ENCODE measurements at regions of chr17 and their contacts with region 1.

Region 1: GRCh38 chr17:68777243-68777855 is 176.2 kb upstream of the FAM20A start:
- DNase-seq: peak; percentile 67
- ATAC-seq: peak; percentile 91
- H3K4me3 ChIP-seq: no peak overlapping the region
- H3K27ac ChIP-seq: no peak overlapping the region
- H3K4me1 ChIP-seq: peaks cover 4% of the 10 kb centered on the region; the same call in 1 of the 2 replicates
- H3K27me3 ChIP-seq: no peaks in the 10 kb centered on the region
- CTCF ChIP-seq: peak; percentile 77
- POLR2A ChIP-seq: no peak
- RAD21 ChIP-seq: peak; percentile 85

Region 2: GRCh38 chr17:68247445-68248198 is 529.7 kb before region 1 on chr17 and contains the start of gene AMZ2:
- CTCF ChIA-PET with region 1: no interaction called
- POLR2A ChIA-PET with region 1: interaction called, 11 read pairs
- dilution Hi-C with region 1: no loop called
- in situ Hi-C with region 1: loop called (anchors 25 kb)
- intact Hi-C with region 1: no loop called
- DNase-seq: peak; percentile 91
- ATAC-seq: peak; percentile 98
- H3K4me3 ChIP-seq: peak within 1 kb of the TSS; percentile 78
- H3K27ac ChIP-seq: peak within 1 kb of the TSS; percentile 86
- H3K4me1 ChIP-seq: no peaks in the 10 kb centered on the region
- H3K27me3 ChIP-seq: no peaks in the 10 kb centered on the region
- CTCF ChIP-seq: no peak
- POLR2A ChIP-seq: peak; percentile 81
- RAD21 ChIP-seq: no peak
- total RNA-seq, gene AMZ2: 90.2 and 100.0 TPM in 2 replicates

Region 3: DNA sequence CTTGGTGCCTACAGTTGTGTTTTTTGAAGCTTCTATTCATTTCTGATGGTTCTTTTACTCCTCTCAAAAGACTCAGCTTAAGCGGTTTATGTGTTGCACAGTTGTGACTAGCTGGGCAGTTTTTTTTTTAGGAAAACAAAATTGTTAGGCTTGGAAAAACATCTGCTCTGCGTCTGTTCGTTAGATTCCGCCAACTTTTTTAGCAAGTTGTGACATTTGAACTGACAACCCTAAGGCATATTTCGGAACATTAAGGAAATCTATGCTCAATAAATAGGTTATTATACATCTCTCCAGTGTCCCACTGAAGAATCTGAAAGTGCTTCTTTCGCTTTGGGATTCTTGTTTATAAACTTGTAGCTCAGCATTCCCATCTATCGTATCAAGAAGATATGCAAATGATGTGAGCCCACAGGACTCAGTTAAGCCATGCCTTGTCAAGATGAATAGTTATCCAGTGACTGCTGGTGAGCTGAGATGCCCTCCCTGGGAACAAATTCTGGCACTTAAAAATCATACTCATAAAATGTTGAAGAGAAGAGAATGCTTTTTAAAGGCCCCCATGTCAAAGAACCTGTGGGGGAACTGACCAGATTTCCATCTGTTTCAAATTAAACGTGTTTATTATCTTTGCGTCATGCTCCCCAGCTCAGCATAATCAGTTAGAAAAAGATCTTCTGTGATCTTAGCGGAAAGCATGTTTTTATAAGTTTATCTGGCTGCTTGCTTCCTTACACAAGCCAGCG is 67.1 kb before region 1 on chr17:
- CTCF ChIA-PET with region 1: no interaction called
- POLR2A ChIA-PET with region 1: no interaction called
- dilution Hi-C with region 1: no loop called
- in situ Hi-C with region 1: no loop called
- intact Hi-C with region 1: no loop called
- DNase-seq: peak; percentile 76
- ATAC-seq: peak; percentile 80
- H3K4me3 ChIP-seq: peak overlapping the region; percentile 22; the same call in 1 of the 2 replicates
- H3K27ac ChIP-seq: peak overlapping the region; percentile 76; the same call in 1 of the 2 replicates
- H3K4me1 ChIP-seq: peaks cover 7% of the 10 kb centered on the region; the same call in 1 of the 2 replicates
- H3K27me3 ChIP-seq: no peaks in the 10 kb centered on the region
- CTCF ChIP-seq: no peak
- POLR2A ChIP-seq: no peak
- RAD21 ChIP-seq: no peak

Region 4: DNA sequence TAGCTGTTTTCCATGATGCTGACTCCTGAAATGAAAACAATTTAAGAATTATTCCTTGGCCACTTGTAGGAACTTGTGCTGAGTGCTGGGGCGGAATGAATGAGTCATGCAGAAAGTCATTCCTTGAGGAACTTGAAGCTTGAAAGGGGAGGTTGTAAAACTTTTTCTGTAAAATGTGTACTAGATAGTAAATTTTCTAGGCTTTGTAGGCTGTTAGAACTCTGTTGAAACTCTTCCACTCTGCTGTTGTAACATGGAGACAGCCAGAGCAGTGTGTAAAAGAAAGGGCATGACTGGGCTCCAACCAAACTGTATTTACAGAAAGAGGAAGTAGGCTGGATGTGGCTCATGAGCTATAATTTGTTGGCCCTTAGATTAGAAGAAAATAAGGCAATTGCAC is 131.7 kb after region 1 on chr17:
- CTCF ChIA-PET with region 1: interaction called, 9 read pairs
- POLR2A ChIA-PET with region 1: no interaction called
- dilution Hi-C with region 1: no loop called
- in situ Hi-C with region 1: no loop called
- intact Hi-C with region 1: loop called (anchors 1 kb)
- DNase-seq: peak; percentile 93
- ATAC-seq: peak; percentile 93
- H3K4me3 ChIP-seq: no peak overlapping the region
- H3K27ac ChIP-seq: peak overlapping the region; percentile 76
- H3K4me1 ChIP-seq: peaks cover 13% of the 10 kb centered on the region
- H3K27me3 ChIP-seq: no peaks in the 10 kb centered on the region
- CTCF ChIP-seq: no peak
- POLR2A ChIP-seq: no peak
- RAD21 ChIP-seq: no peak

Region 5: GRCh38 chr17:68972119-68972704 is 194.9 kb after region 1 on chr17:
- CTCF ChIA-PET with region 1: interaction called, 6 read pairs
- POLR2A ChIA-PET with region 1: no interaction called
- dilution Hi-C with region 1: no loop called
- in situ Hi-C with region 1: loop called (anchors 5 kb)
- intact Hi-C with region 1: loop called (anchors 1 kb)
- DNase-seq: peak; percentile 36
- ATAC-seq: peak; percentile 71
- H3K4me3 ChIP-seq: no peak overlapping the region
- H3K27ac ChIP-seq: no peak overlapping the region
- H3K4me1 ChIP-seq: no peaks in the 10 kb centered on the region
- H3K27me3 ChIP-seq: no peaks in the 10 kb centered on the region
- CTCF ChIP-seq: peak; percentile 79
- POLR2A ChIP-seq: no peak
- RAD21 ChIP-seq: peak; percentile 76

Region 6: DNA sequence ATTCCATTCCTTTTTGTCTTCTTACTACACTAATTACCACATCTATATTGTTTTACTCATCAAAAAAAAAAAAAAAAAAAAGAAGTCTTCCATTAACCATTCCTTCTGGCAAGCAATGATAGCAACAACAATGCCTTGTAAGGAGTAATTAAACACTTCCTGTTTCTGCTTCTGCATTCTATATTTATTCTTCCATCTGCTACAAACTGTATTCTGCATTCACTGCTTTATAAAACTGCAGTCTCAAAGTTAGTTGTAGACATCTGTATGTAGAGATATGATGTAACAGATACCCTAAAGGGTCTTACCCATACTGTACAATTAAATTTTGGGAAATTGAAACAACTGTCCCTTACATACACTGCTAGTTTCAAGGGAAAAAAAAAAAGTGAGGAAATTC is 393.0 kb after region 1 on chr17:
- CTCF ChIA-PET with region 1: no interaction called
- POLR2A ChIA-PET with region 1: no interaction called
- dilution Hi-C with region 1: no loop called
- in situ Hi-C with region 1: no loop called
- intact Hi-C with region 1: no loop called
- DNase-seq: no peak
- ATAC-seq: no peak
- H3K4me3 ChIP-seq: no peak overlapping the region
- H3K27ac ChIP-seq: no peak overlapping the region
- H3K4me1 ChIP-seq: no peaks in the 10 kb centered on the region
- H3K27me3 ChIP-seq: no peaks in the 10 kb centered on the region
- CTCF ChIP-seq: no peak
- POLR2A ChIP-seq: no peak
- RAD21 ChIP-seq: no peak

Region 7: GRCh38 chr17:69235338-69235930 is 458.1 kb after region 1 on chr17:
- CTCF ChIA-PET with region 1: interaction called, 9 read pairs
- POLR2A ChIA-PET with region 1: no interaction called
- dilution Hi-C with region 1: no loop called
- in situ Hi-C with region 1: loop called (anchors 5 kb)
- intact Hi-C with region 1: loop called (anchors 1 kb)
- DNase-seq: peak; percentile 70
- ATAC-seq: peak; percentile 94
- H3K4me3 ChIP-seq: no peak overlapping the region
- H3K27ac ChIP-seq: no peak overlapping the region
- H3K4me1 ChIP-seq: no peaks in the 10 kb centered on the region
- H3K27me3 ChIP-seq: no peaks in the 10 kb centered on the region
- CTCF ChIP-seq: peak; percentile 81
- POLR2A ChIP-seq: no peak
- RAD21 ChIP-seq: peak; percentile 81

Region 8: DNA sequence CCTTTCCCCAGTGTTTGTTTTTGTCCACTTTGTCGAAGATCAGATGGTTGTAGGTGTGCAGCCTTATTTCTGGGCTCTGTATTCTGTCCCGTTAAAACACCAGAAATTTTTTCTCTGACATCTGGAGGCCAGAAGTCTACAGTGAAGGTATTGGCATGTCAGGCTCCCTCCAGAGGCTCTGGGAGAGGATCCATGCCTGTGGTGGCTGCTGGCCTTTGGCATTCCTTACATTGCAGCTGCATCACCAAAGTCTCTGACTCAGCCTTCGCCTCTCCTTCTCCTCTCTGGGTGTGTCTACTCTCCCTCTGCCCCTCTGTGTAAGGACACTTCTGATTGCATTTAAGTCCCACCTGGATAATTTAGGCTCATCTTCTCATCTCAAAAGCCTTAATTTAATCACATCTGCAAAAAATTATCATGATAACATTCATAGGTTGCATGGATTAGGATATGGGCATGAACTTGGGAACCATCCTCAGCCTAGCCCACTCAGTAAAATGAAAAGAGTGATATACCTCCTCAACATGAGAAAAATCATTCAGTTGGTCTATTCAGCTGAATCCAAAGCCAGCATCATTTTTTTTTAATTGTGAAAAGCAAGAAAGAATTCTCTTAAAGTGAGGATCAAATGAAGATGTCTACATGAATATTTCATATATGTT is 715.2 kb after region 1 on chr17:
- CTCF ChIA-PET with region 1: no interaction called
- POLR2A ChIA-PET with region 1: no interaction called
- dilution Hi-C with region 1: no loop called
- in situ Hi-C with region 1: loop called (anchors 25 kb)
- intact Hi-C with region 1: no loop called
- DNase-seq: peak; percentile 88
- ATAC-seq: peak; percentile 100
- H3K4me3 ChIP-seq: no peak overlapping the region
- H3K27ac ChIP-seq: no peak overlapping the region
- H3K4me1 ChIP-seq: no peaks in the 10 kb centered on the region
- H3K27me3 ChIP-seq: no peaks in the 10 kb centered on the region
- CTCF ChIP-seq: no peak
- POLR2A ChIP-seq: no peak
- RAD21 ChIP-seq: no peak

Measured in IMR-90 (cell line).